Activated naive CD4-positive, alpha-beta T cell treated with anti-CD3 and anti-CD28 coated beads for 36 hours (primary cell): ENCODE measurements at regions of chr7 and their contacts with region 1.

Region 1: GRCh38 chr7:89622838-89623672 is 531.2 kb upstream of the STEAP1 start:
- DNase-seq: peak; percentile 56
- H3K4me3 Mint-ChIP-seq: no peak overlapping the region
- H3K27ac Mint-ChIP-seq: no peak overlapping the region
- H3K4me1 Mint-ChIP-seq: peaks cover 41% of the 10 kb centered on the region
- H3K27me3 Mint-ChIP-seq: no peaks in the 10 kb centered on the region

Region 2: DNA sequence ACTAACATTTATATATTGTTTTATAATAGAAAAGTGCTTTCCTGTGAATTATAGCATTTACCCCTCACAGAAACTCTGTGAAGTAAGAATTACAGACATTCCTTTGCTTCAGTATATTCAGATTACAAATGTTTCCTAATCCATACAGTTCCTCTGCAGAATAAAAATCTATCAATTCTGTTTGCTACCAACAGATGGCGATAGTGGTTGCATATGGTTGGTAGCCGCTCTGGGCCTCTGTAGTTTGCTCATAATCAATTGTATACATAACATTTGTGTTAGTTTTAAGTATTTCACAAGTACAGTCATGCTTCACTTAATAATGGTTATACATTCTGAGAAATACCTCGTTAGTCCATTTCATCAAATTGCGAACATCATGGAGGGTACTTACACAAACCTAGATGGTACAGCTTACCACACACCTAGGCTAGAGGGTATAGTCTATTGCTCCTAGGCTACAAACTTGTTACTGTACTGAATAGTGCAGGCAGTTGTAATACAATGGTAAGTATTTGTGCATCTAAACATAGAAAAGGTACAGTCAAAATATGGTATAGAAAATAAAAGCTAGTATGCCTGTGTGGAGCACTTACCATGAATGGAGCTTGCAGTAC is 1221.9 kb before region 1 on chr7:
- CTCF ChIA-PET with region 1: no interaction called
- intact Hi-C with region 1: loop called (anchors 1 kb)
- DNase-seq: peak; percentile 5
- H3K4me3 Mint-ChIP-seq: no peak overlapping the region
- H3K27ac Mint-ChIP-seq: no peak overlapping the region
- H3K4me1 Mint-ChIP-seq: peaks cover 9% of the 10 kb centered on the region
- H3K27me3 Mint-ChIP-seq: no peaks in the 10 kb centered on the region

Region 3: GRCh38 chr7:88789480-88790064 is 833.5 kb before region 1 on chr7:
- CTCF ChIA-PET with region 1: interaction called, 14 read pairs
- intact Hi-C with region 1: loop called (anchors 1 kb)
- DNase-seq: no peak
- H3K4me3 Mint-ChIP-seq: no peak overlapping the region
- H3K27ac Mint-ChIP-seq: no peak overlapping the region
- H3K4me1 Mint-ChIP-seq: no peaks in the 10 kb centered on the region
- H3K27me3 Mint-ChIP-seq: no peaks in the 10 kb centered on the region

Region 4: DNA sequence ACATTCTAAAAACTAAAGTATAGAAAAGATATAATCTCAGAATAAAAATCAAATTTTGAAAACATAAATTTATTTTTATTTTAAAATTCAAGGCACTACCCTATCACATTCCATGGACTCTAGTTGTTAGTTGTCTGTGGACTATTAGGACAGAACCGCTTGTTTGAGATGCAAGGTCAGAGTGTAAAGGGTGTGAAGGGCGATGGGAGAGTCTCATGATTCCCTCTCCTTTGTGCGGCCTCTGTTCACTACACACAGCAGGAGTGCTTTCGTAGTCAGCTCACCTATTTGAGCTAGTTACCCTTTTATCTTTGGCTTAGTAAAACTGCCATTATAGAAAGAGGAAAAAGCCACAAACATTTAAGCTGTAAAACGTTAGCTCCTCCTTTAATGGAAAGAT is 637.8 kb before region 1 on chr7:
- CTCF ChIA-PET with region 1: interaction called, 4 read pairs
- intact Hi-C with region 1: loop called (anchors 5 kb)
- DNase-seq: no peak
- H3K4me3 Mint-ChIP-seq: no peak overlapping the region
- H3K27ac Mint-ChIP-seq: no peak overlapping the region
- H3K4me1 Mint-ChIP-seq: no peaks in the 10 kb centered on the region
- H3K27me3 Mint-ChIP-seq: peaks cover 4% of the 10 kb centered on the region

Region 5: DNA sequence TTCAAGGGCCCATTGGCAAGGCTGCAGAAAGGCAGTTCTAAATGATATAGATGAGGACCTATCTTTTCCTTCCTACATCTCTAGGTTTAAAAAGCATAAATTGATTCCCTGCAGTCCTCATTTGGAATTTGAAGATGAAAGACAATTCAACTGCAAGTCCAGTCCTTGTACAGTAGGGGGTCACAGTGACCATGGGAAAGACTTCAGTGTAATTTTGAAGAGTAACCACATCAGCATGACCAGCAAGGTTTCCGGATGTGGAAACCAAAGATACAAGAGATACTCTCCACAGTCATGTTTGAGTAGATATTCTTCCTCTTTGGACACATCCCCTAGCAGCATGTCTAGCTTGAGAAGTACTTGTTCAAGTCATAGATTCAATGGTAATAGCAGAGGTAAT is 288.3 kb before region 1 on chr7:
- CTCF ChIA-PET with region 1: interaction called, 3 read pairs
- intact Hi-C with region 1: loop called (anchors 1 kb)
- DNase-seq: no peak
- H3K4me3 Mint-ChIP-seq: no peak overlapping the region
- H3K27ac Mint-ChIP-seq: no peak overlapping the region
- H3K4me1 Mint-ChIP-seq: peaks cover 6% of the 10 kb centered on the region
- H3K27me3 Mint-ChIP-seq: no peaks in the 10 kb centered on the region

Region 6: DNA sequence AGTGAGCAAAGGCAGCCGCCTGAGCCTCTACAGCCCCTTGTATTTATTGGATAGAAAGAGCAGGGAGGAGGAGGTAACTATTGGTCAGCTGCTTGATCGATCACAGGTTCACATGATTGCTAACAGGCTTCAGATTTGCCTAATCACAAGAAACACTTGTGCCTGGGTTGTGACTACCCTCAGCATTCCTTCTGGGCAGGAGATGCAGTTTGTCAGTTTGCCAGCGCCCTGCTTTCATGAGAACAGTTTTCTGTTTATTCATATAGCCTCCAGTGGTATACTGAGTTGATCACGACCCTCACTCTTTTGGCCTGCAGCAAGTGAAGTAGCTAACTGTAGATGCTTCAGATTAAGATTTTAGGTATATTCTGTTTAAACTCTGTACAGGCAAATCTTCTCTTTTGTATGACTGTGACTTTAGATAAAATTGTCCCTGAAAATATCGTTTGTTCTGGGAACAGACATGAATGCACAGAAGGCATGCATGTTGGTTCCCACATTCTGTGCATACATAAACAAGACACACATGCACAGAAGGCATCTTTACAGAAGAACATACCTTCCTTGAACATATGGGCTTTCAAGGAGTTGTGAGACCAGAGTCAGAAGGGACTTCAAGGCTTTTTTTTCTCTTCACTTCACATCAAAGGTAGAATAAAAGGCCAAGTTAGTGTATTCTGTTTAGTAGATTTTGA is 108.8 kb after region 1 on chr7:
- CTCF ChIA-PET with region 1: no interaction called
- intact Hi-C with region 1: no loop called
- DNase-seq: no peak
- H3K4me3 Mint-ChIP-seq: no peak overlapping the region
- H3K27ac Mint-ChIP-seq: no peak overlapping the region
- H3K4me1 Mint-ChIP-seq: no peaks in the 10 kb centered on the region
- H3K27me3 Mint-ChIP-seq: peaks cover 4% of the 10 kb centered on the region